PC-9 (cell line): ENCODE measurements at regions of chr22 and their contacts with region 1.

Region 1: DNA sequence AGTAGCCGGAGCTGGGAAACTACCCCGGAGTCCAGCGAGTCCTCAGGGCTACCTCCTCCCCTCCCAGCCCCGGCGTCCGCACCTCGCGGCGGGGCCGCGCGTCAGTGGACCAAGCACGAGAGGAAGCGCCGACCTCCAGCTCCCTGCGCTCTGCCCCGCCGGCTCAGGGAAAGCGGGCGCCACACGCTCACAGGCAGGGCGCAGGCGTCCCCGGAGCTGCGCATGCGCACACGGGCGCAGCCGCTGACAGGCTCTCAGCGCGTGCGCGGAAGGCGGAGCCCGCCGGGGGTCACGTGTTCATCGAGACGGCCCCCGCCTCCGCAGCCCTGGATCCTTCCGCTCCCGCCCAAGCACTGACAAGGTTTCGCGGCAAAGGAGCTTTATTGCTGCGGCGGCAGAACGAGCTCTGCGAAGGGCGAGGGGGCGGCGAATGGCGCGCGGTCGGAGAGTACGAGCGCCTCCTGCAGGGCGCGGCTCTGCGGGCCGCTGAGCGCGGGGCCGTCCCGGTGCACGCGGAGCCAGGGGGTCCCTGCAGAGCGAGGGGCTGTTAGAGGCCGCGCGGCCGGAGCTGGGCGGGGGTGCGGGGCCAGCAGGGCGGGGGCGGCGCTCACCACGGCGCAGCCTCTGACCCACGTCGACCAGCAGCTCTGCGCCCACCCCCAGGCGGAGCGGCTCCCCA is at the start of gene SCO2:
- DNase-seq: peak; percentile 94 to 97
- H3K4me3 ChIP-seq: peak within 1 kb of the TSS; percentile 96
- H3K27ac ChIP-seq: peak within 1 kb of the TSS; percentile 56
- H3K4me1 ChIP-seq: peaks cover 23% of the 10 kb centered on the region
- H3K27me3 ChIP-seq: no peaks in the 10 kb centered on the region
- CTCF ChIP-seq: peak; percentile 31; the same call in 1 of the 2 replicates
- total RNA-seq, gene SCO2: 3.0 and 6.1 TPM in 2 replicates

Region 2: DNA sequence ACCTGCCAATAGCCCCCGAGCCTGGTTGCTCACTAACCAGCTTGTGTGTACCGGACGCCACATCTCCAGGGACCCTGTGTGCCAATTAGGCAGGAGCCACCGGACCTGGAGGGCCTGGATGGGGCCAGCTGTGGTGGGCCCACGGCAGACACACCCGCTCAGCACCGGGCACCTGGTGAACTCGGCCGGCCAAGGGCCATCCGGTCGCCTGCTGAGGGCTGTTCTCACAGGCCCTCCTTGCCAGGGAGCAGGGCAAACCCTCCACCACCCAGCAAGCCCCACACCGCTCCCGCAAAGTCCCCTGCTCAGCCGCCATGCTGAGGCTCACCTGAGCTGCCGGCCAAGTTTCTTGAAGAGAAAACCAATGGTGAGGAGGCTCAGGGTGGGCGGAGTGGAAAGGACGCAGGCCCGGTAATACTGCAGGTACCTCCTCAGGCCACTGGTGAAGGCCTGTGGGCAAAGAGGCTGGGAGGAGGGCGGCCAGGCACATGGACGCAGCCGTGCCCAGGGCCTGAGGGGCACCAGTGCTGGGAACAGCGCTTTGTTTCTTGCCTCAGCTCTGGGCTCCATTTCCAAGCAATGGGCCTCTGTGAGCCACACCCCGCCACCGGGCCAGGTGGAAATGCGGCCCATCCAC is 297.8 kb before region 1 on chr22:
- CTCF ChIA-PET with region 1: interaction called, 10 read pairs
- POLR2A ChIA-PET with region 1: no interaction called
- intact Hi-C with region 1: no loop called
- DNase-seq: no peak
- H3K4me3 ChIP-seq: no peak overlapping the region
- H3K27ac ChIP-seq: no peak overlapping the region
- H3K4me1 ChIP-seq: no peaks in the 10 kb centered on the region
- H3K27me3 ChIP-seq: no peaks in the 10 kb centered on the region
- CTCF ChIP-seq: no peak

Region 3: DNA sequence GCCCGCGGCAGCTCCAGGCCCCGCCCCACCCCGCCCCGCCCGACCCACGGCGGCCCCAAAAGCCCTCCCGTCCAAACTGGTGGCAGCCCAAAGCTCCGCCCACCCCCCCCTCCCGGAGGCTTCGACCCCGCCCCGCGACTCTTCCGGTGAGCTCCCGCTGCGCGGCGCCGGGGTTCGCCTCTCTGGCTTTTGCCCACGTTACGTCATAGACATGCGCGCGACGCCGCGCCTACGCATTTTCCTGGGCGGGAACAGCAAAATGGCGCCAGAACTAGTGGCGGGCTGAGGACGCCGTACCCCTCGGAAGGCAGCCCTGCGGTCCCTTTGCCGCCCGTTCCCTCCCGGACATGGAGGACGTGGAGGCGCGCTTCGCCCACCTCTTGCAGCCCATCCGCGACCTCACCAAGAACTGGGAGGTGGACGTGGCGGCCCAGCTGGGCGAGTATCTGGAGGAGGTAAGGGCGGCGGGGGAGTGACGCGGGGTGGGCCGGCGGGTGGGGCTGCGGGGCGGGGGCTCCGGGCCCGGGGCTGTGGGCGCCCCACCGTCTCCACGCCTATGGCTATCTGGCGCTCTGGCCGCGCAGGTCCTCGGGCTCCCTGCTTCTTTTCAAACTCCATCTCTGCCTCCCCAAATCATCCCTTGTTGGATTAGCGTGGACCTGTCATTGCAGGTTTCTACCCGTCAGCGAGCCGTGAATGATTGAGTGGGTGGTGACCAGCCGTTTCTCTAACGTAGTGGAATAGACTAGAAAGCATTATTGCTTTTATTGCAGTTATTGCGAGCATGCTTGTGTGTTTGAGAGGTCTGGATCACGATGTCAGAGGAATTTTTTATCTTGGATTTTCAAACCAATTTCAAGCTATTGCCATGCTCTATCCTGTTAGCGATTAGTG is 17.3 kb before region 1 on chr22 and contains the start of gene NCAPH2:
- CTCF ChIA-PET with region 1: interaction called, 5 read pairs
- POLR2A ChIA-PET with region 1: interaction called, 27 read pairs
- intact Hi-C with region 1: loop called (anchors 2 kb)
- DNase-seq: peak; percentile 93 to 94
- H3K4me3 ChIP-seq: peak within 1 kb of the TSS; percentile 97
- H3K27ac ChIP-seq: peak within 1 kb of the TSS; percentile 48
- H3K4me1 ChIP-seq: peaks cover 19% of the 10 kb centered on the region
- H3K27me3 ChIP-seq: no peaks in the 10 kb centered on the region
- CTCF ChIP-seq: no peak
- total RNA-seq, gene NCAPH2: 58.8 and 62.9 TPM in 2 replicates

Region 4: GRCh38 chr22:50562523-50563412 is 37.2 kb after region 1 on chr22 and contains the start of gene SYCE3:
- CTCF ChIA-PET with region 1: interaction called, 14 read pairs
- POLR2A ChIA-PET with region 1: no interaction called
- intact Hi-C with region 1: loop called (anchors 2 kb)
- DNase-seq: peak; percentile 93 to 98
- H3K4me3 ChIP-seq: peak within 1 kb of the TSS; percentile 70
- H3K27ac ChIP-seq: no peak within 1 kb of the TSS
- H3K4me1 ChIP-seq: peaks cover 17% of the 10 kb centered on the region
- H3K27me3 ChIP-seq: no peaks in the 10 kb centered on the region
- CTCF ChIP-seq: peak; percentile 98
- total RNA-seq, gene SYCE3: not detected in 2 replicates

Region 5: GRCh38 chr22:50582562-50583293 is 57.2 kb after region 1 on chr22 and contains the start of gene CHKB:
- CTCF ChIA-PET with region 1: no interaction called
- POLR2A ChIA-PET with region 1: no interaction called
- intact Hi-C with region 1: loop called (anchors 2 kb)
- DNase-seq: peak; percentile 99
- H3K4me3 ChIP-seq: peak within 1 kb of the TSS; percentile 89
- H3K27ac ChIP-seq: peak within 1 kb of the TSS; percentile 86
- H3K4me1 ChIP-seq: peaks cover 18% of the 10 kb centered on the region
- H3K27me3 ChIP-seq: no peaks in the 10 kb centered on the region
- CTCF ChIP-seq: no peak
- total RNA-seq, gene CHKB: 60.0 and 70.4 TPM in 2 replicates

Region 6: DNA sequence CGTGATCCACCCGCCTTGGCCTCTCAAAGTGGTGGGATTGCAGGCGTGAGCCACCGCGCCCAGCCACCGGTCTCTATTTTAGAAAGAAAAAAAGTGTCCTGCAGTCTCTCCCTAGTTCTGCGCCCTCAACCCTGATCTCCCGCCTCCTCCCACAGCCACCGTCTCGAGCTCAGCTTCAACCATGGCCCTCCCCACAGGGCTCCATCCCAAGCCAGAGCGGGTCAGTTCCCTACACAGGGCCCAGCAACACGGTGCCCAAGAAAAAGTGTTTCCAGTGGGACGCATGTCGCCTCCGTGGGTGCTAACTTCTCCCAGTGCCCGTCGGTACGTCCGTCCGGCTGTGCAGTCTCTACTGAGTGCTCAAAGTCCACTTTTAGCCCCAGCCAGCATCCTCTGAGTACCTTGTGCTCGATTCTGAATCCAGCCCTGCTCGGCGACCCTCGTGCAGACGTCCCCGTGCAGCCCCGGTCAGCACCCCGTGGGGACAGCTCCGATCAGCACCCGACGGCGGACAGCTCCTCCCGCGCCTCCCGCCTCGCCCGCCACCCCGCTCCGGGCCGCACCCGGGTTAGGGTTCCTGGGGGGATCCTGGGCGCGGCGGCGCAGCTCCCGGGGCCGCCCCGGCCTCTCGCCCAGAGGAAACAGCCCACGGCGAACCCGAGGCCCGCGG is 74.4 kb after region 1 on chr22:
- CTCF ChIA-PET with region 1: no interaction called
- POLR2A ChIA-PET with region 1: no interaction called
- intact Hi-C with region 1: no loop called
- DNase-seq: peak in 1 of 2 experiments; percentile 61
- H3K4me3 ChIP-seq: no peak overlapping the region
- H3K27ac ChIP-seq: no peak overlapping the region
- H3K4me1 ChIP-seq: no peaks in the 10 kb centered on the region
- H3K27me3 ChIP-seq: peaks cover 39% of the 10 kb centered on the region
- CTCF ChIP-seq: no peak

Region 7: DNA sequence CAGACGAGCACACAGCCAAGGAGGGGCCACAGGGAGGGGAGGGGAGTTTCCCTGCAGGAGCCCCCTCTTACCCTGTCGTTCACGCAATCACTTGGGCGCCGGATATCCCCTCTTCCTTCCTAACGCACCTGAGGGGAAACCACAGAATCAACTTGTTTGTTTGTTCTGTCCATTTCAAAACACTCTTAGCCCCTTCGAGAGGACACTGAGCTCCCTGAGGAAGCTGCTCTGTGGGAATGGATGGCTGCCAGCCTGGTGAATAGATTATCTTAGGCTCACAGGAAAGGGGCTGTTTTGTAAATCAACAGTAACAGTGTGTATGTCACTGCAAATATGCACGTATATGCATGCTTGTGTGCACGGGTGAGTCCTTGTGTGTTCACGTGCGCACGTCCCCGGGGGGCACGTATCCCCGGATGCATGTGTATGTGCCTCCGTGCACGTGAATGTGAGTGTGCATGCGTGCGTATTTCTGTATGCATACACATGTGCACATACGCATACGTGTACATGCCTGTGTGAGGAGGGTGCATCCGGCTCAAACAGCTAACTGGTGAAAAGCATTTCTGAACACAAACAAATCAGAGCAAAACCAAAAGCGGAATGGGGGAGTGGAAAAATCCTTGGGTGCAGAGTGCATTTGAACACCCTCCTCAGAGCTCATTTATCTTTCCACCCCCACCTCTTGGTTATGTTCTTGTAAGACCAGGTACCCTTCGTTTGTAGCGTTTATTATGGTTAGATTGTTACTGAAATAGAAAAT is 95.2 kb after region 1 on chr22:
- CTCF ChIA-PET with region 1: interaction called, 8 read pairs
- POLR2A ChIA-PET with region 1: no interaction called
- intact Hi-C with region 1: loop called (anchors 2 kb)
- DNase-seq: no peak
- H3K4me3 ChIP-seq: peak overlapping the region; percentile 38; the same call in 1 of the 2 replicates
- H3K27ac ChIP-seq: no peak overlapping the region
- H3K4me1 ChIP-seq: peaks cover 31% of the 10 kb centered on the region
- H3K27me3 ChIP-seq: no peaks in the 10 kb centered on the region
- CTCF ChIP-seq: peak; percentile 96